ENCODE measurements at regions of chr4 and their contacts with region 1.

Region 1: GRCh38 chr4:74444891-74445642 is at the start of gene AREG:
- DNase-seq: no peak
- H3K4me3 ChIP-seq: peak within 1 kb of the TSS; percentile 78
- CTCF ChIP-seq: peak; percentile 70

Region 2: GRCh38 chr4:73870260-73870659 is 574.8 kb before region 1 on chr4:
- CTCF ChIA-PET with region 1: no interaction called
- POLR2A ChIA-PET with region 1: no interaction called
- DNase-seq: no peak
- H3K4me3 ChIP-seq: no peak overlapping the region
- CTCF ChIP-seq: no peak

Region 3: DNA sequence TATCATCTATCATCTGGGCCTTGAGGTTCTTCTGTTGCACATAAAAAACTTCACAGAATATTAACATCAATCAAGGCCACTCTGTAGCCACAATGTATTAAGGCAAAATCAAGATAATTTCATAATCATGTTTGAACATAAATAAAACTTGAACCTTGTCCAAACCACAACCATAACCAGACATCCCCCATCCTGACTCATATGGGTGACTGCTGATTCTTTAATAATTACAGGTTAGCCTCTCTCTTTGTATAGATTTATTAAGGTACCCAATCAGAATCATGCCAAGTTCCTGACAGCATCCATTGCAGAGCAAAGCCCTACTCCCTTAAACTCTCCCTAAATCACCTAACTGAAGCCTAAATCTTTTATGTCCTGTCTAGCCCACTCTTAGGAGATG is 16.8 kb before region 1 on chr4:
- CTCF ChIA-PET with region 1: interaction called, 11 read pairs
- POLR2A ChIA-PET with region 1: no interaction called
- DNase-seq: no peak
- H3K4me3 ChIP-seq: no peak overlapping the region
- CTCF ChIP-seq: no peak

Region 4: DNA sequence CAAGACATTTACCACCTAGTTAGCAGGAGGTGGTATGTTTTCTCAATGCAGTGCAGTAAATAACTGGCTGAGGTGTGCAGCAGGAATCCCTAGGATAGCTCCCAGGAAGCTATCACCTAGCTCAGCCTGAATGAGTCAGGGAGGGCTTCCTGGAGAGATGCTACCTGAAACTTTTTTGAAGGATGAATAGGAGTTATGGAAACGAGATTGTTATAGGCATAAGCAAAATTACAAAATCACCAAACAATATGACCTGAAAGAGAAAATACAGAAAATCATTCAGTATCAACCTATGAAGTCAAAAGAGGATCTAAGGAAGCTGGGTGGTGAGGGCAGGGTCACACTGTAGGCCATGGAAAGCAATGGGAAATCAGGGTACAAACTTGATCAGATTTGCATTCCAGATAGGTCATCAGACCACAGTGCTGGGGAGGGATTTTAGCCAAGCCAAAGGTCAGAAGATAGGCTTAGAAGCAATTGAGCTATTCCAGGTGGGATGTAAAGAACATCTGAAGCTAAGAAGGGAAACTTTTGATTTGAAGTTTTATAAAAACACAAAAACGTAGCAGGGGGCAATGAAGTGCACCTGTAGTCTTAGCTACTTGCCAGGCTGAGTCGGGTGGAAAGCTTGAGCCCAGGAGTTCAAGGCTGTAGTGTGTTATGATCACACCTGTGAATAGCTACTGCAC is 11.1 kb after region 1 on chr4:
- CTCF ChIA-PET with region 1: interaction called, 24 read pairs
- POLR2A ChIA-PET with region 1: no interaction called
- DNase-seq: no peak
- H3K4me3 ChIP-seq: no peak overlapping the region
- CTCF ChIP-seq: no peak

Measured in AG04449 (cell line).